ENCODE measurements at regions of chr10 and their contacts with region 1.

Region 1: GRCh38 chr10:90288391-90288933 is 569.4 kb downstream of the HTR7 start:
- DNase-seq: no peak
- ATAC-seq: peak; percentile 76
- H3K4me3 Mint-ChIP-seq: no peak overlapping the region
- H3K27ac Mint-ChIP-seq: no peak overlapping the region
- H3K4me1 Mint-ChIP-seq: peaks cover 32% of the 10 kb centered on the region
- H3K27me3 Mint-ChIP-seq: no peaks in the 10 kb centered on the region
- CTCF ChIP-seq: no peak

Region 2: GRCh38 chr10:90579602-90580242 is 291.3 kb after region 1 on chr10:
- CTCF ChIA-PET with region 1: interaction called, 24 read pairs
- POLR2A ChIA-PET with region 1: no interaction called
- DNase-seq: peak; percentile 38
- ATAC-seq: peak; percentile 99
- H3K4me3 Mint-ChIP-seq: no peak overlapping the region
- H3K27ac Mint-ChIP-seq: no peak overlapping the region
- H3K4me1 Mint-ChIP-seq: peaks cover 5% of the 10 kb centered on the region; the same call in 1 of the 2 replicates
- H3K27me3 Mint-ChIP-seq: no peaks in the 10 kb centered on the region
- CTCF ChIP-seq: 0 out of 2 replicates have a peak, but pooled peaks have one; percentile 14

Measured in WTC11 (cell line).